ENCODE measurements at regions of chr7 and their contacts with region 1.

Region 1: DNA sequence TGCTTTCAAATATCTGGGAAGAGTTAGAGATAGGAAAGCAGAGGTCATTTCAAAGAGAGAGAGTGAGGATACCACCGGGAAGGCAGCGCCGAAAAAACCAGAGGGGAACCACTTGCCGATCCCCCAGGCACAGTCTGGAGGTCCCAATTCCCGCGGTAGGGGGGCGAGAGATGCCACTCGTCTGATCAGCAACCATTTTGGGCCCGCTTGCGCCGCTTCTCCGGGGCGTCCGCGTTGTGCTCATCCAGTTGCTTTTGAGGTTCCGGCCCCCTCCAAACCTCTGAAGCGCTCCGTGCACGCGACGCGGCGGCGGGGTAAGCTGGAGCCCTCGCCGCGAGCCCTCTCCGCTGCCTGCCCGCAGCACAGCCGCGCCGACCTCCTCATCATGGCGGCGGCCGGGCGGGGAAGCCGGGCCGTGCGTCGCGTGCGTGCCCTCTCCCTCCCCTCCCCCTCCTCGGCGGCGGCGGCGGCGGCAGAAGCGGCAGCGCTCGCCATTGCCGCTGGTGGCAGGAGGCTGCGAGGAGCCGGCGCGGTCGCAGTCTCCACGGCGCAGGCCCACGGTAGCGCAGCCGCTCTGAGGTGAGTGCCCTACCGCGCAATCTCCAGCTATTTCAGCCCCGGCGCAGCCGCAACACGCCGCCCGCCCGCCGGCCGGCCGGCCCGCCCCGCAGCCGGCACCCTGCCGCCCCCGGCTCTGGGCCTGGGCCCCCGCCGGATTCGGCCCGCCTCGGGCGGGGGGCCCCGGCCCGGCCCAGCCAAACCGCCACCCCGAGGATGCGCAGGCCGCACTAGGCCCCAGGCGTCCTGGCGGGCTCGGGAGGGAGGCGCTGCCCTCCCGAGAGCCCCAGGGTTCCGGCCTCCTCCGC is at the start of gene NRF1:
- DNase-seq: peak; percentile 88
- H3K4me3 Mint-ChIP-seq: peak within 1 kb of the TSS; percentile 94
- H3K27ac Mint-ChIP-seq: peak within 1 kb of the TSS; percentile 97
- H3K4me1 Mint-ChIP-seq: peaks cover 47% of the 10 kb centered on the region
- H3K27me3 Mint-ChIP-seq: no peaks in the 10 kb centered on the region
- total RNA-seq, gene NRF1: 22.8 and 25.4 TPM in 2 replicates

Region 2: DNA sequence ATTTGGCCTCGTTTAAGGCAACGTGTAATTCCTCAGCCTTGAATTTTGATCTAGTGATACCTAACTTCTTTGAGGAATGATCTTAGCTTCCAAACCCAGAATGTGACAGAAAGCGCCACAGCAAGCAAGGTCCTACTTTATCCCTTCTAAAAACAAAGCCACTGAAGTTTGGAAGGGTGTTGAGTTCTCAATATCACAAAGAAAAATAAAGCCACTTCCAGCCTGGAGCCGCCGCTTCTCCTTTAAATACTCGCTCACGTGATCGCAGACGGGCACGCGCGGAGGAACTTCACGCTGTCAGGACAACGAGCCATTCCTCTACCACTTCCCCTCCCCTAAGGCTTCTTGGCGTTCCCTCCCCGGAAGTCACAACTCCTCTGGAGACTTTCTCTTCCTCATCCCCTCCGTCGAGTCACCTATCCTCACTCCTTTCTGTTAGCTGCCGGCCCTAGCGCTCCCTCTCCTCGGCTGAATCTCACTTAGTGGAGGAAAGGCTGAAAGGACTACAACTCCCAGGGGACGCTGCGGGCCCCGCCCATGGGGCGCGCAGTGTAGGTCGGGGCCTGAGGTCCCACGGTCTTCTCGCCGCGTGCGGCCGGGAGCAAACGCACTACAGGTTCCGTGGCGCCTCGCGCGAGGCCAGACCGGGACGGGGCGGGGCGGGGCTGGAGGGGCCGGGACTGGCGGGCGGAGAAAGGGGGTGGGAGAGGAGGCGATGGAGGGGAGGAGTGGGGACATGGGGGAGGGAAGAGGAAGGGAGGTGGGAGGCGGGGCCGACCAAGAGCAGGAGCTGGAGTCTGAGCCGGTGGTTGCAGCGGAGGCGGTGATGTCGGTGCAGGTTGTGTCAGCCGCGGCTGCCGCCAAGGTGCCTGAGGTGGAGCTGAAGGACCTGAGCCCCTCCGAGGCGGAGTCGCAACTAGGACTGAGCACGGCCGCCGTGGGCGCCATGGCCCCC is 387.0 kb before region 1 on chr7 and contains the start of gene AHCYL2:
- intact Hi-C with region 1: loop called (anchors 5 kb)
- DNase-seq: peak; percentile 94
- H3K4me3 Mint-ChIP-seq: peak within 1 kb of the TSS; percentile 94
- H3K27ac Mint-ChIP-seq: peak within 1 kb of the TSS; percentile 96
- H3K4me1 Mint-ChIP-seq: peaks cover 22% of the 10 kb centered on the region
- H3K27me3 Mint-ChIP-seq: no peaks in the 10 kb centered on the region
- total RNA-seq, gene AHCYL2: 14.7 and 15.1 TPM in 2 replicates

Region 3: DNA sequence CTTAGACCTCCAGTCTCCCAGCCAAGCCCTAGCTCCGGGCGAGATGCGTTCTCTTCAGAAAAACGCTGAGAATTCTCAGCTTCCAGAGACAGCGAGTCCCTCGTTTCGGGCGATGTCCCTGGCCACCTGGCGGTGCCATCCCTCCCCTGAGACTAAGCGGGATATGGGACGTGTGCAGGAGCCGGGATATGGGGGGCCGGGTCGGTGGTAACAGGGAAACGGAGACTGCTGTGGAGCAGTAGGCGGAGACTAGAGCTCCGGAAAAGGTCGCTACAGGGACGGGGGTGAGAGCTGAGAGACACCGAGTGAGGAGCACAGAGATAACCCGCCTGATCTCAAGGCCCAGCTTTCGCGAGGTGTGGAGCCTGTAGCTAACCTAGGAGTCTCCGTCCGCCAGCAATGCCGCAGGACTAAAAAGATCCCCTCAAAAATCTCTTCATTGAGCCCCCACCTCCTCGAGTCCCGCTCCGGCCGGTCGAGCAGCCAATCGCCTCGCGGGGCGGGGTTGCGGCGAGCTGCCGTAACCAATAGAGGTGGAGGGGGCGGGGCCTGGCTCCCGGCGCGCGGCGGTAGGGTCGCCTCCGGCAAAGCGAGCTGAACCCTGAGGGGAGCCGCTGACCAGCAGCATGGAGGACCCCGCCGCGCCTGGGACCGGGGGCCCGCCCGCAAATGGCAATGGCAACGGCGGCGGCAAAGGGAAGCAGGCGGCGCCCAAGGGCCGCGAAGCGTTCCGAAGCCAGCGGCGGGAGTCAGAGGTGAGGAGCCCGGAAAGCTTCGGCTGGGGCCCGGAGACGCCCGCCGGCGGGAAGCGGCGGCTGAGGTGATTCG is 177.4 kb before region 1 on chr7 and contains the start of gene STRIP2:
- intact Hi-C with region 1: loop called (anchors 5 kb)
- DNase-seq: peak; percentile 91
- H3K4me3 Mint-ChIP-seq: peak within 1 kb of the TSS; percentile 99
- H3K27ac Mint-ChIP-seq: peak within 1 kb of the TSS; percentile 94
- H3K4me1 Mint-ChIP-seq: peaks cover 42% of the 10 kb centered on the region
- H3K27me3 Mint-ChIP-seq: peaks cover 13% of the 10 kb centered on the region
- total RNA-seq, gene STRIP2: 73.4 and 73.5 TPM in 2 replicates

Region 4: GRCh38 chr7:129502376-129502776 is 109.1 kb before region 1 on chr7 and contains the start of gene SMKR1:
- intact Hi-C with region 1: loop called (anchors 2 kb)
- DNase-seq: peak; percentile 87
- H3K4me3 Mint-ChIP-seq: peak within 1 kb of the TSS; percentile 82
- H3K27ac Mint-ChIP-seq: peak within 1 kb of the TSS; percentile 71
- H3K4me1 Mint-ChIP-seq: peaks cover 24% of the 10 kb centered on the region
- H3K27me3 Mint-ChIP-seq: peaks cover 7% of the 10 kb centered on the region
- total RNA-seq, gene SMKR1: 4.7 and 6.8 TPM in 2 replicates

Region 5: DNA sequence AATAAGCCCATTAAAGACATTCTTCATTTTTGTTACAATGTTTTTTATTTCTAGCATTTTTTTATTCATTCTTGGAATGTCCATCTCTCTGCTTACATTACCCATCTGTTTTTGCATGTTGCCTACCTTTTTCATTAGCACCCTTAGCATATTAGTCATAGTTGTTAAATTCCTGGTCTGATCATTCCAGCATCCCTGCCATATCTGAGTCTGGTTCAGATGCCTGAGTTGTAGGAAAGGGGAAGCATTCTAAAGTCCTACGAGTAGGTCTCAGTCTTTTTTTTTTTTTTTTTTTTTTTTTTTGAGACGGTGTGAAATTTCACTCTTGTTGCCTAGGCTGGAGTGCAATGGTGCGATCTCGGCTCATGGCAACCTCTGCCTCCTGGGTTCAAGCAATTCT is 19.6 kb before region 1 on chr7:
- intact Hi-C with region 1: no loop called
- DNase-seq: no peak
- H3K4me3 Mint-ChIP-seq: no peak overlapping the region
- H3K27ac Mint-ChIP-seq: no peak overlapping the region
- H3K4me1 Mint-ChIP-seq: no peaks in the 10 kb centered on the region
- H3K27me3 Mint-ChIP-seq: peaks cover 3% of the 10 kb centered on the region

Region 6: GRCh38 chr7:129825496-129826267 is 214.2 kb after region 1 on chr7:
- intact Hi-C with region 1: loop called (anchors 5 kb)
- DNase-seq: peak; percentile 80
- H3K4me3 Mint-ChIP-seq: peak overlapping the region; percentile 91
- H3K27ac Mint-ChIP-seq: peak overlapping the region; percentile 52
- H3K4me1 Mint-ChIP-seq: peaks cover 14% of the 10 kb centered on the region
- H3K27me3 Mint-ChIP-seq: peaks cover 4% of the 10 kb centered on the region

Region 7: DNA sequence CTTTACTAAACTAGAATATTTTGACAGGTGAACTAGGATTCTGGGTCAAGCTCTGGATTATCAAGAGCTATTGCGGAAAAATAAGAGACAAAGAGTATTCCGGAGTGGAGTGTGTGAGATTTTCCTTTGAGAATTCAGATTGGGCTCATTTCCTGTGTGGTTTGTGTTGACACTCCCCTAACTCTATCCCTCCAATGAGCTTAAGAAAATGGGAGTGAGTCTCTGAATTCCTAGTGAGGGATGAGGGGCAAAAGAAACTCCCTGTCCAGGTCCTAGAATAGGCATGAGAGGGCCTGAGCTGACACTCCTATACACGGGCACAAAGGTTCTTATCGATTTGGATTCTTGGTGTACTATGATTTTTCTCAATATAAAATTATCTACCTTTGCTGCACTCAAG is 1112.3 kb after region 1 on chr7:
- intact Hi-C with region 1: no loop called
- DNase-seq: no peak
- H3K4me3 Mint-ChIP-seq: no peak overlapping the region
- H3K27ac Mint-ChIP-seq: no peak overlapping the region
- H3K4me1 Mint-ChIP-seq: no peaks in the 10 kb centered on the region
- H3K27me3 Mint-ChIP-seq: peaks cover 32% of the 10 kb centered on the region

Measured in activated T-helper 2 cell treated with anti-CD3 and anti-CD28 coated beads, Interferon-gamma antibody, Interleukin-2, Interleukin-4, amounts not matched to agents 10 μg/mL and 5 μg/mL and 100 μg/mL, durations not matched to agents 14 hours and 24 hours and 36 hours (primary cell).